K562 (cell line): ENCODE measurements at regions of chr2 and their contacts with region 1.

Region 1: DNA sequence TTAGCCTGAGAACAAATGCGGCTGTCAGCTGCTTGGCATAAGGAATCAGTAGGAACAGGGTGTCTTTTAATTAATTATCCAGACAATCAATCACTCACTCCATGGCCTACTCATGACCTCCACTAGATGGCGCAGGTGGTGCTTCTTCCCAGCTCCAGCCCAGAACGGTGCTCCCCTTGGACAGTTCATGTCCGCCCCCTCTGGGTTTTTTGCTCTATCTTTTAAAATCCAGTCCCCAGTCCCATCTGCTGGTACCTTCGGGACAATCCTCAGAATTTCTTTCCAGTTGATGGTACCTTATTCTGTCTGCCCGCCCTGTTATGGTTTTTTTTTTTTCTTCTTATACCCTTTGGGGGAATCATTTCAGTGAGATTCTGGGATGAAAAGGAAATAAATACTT is 99.8 kb downstream of the CACNB4 start:
- DNase-seq: peak; percentile 80 to 88 (median 85)
- ATAC-seq: peak; percentile 97
- H3K4me3 ChIP-seq: no peak overlapping the region
- H3K27ac ChIP-seq: no peak overlapping the region
- H3K4me1 ChIP-seq: no peaks in the 10 kb centered on the region; a peak in 1 of 5 replicates
- H3K27me3 ChIP-seq: peaks cover 16 to 17% of the 10 kb centered on the region in 2 experiments
- CTCF ChIP-seq: peak; percentile 93 to 97 (median 97)
- EP300 ChIP-seq: peak; percentile 25; the same call in 1 of the 2 replicates
- POLR2A ChIP-seq: no peak
- RAD21 ChIP-seq: peak; percentile 74 to 83

Region 2: DNA sequence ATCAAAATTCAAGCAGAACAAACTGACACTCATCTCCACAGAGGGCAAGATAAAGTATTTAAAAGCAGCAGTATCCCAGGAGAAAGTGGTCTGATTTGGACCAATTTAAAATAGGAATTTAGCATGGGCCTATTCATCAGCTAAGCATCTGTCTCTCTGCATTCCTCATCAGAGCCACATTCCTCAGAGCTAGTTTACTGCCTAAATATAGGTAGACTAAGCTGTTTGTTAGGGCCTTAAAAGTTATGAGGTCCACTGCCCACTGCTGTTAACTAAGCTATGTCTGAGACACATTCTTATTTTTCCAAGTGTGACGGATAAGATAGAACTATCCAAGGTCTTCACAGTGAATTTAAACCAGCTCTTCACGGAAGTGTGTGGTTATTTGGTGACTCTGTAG is 282.3 kb before region 1 on chr2:
- CTCF ChIA-PET with region 1: no interaction called
- POLR2A ChIA-PET with region 1: no interaction called
- in situ Hi-C with region 1: no loop called
- intact Hi-C with region 1: no loop called
- DNase-seq: no peak
- ATAC-seq: no peak
- H3K4me3 ChIP-seq: no peak overlapping the region
- H3K27ac ChIP-seq: no peak overlapping the region
- H3K4me1 ChIP-seq: peaks cover 0 to 8% of the 10 kb centered on the region in 2 experiments; a peak in 3 of 5 replicates
- H3K27me3 ChIP-seq: 0 out of 5 replicates have a peak, but pooled peaks cover 0 to 3% of the 10 kb centered on the region in 2 experiments
- CTCF ChIP-seq: no peak
- EP300 ChIP-seq: no peak
- POLR2A ChIP-seq: no peak
- RAD21 ChIP-seq: no peak

Region 3: DNA sequence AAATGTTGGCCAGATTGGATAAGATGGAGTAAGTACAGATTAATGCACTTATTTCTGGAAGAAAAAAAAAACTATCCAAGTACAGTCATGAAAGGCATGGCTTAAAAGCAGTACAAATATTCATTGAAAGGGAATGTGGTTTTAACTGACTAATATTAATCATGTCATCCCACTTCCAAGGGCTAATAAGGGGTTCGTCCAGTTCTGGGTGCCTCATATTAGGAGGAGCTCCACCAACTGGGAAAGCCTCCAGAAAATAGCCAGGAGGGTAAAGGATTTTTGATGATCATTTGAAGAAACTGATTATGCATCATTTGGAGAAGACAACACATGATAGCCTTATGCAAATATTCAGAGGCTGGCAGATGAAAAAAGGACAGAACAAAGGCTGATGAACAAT is 55.6 kb before region 1 on chr2:
- CTCF ChIA-PET with region 1: no interaction called
- POLR2A ChIA-PET with region 1: no interaction called
- in situ Hi-C with region 1: no loop called
- intact Hi-C with region 1: no loop called
- DNase-seq: no peak
- ATAC-seq: no peak
- H3K4me3 ChIP-seq: no peak overlapping the region
- H3K27ac ChIP-seq: no peak overlapping the region
- H3K4me1 ChIP-seq: no peaks in the 10 kb centered on the region; a peak in 1 of 5 replicates
- H3K27me3 ChIP-seq: no peaks in the 10 kb centered on the region
- CTCF ChIP-seq: no peak
- EP300 ChIP-seq: no peak
- POLR2A ChIP-seq: no peak
- RAD21 ChIP-seq: no peak

Region 4: GRCh38 chr2:152025678-152026287 is 26.7 kb after region 1 on chr2:
- CTCF ChIA-PET with region 1: interaction called, 25 read pairs
- POLR2A ChIA-PET with region 1: no interaction called
- in situ Hi-C with region 1: no loop called
- intact Hi-C with region 1: loop called (anchors 1 kb)
- DNase-seq: peak; percentile 70 to 90 (median 78)
- ATAC-seq: peak; percentile 99
- H3K4me3 ChIP-seq: no peak overlapping the region
- H3K27ac ChIP-seq: no peak overlapping the region
- H3K4me1 ChIP-seq: no peaks in the 10 kb centered on the region
- H3K27me3 ChIP-seq: peaks cover 0 to 7% of the 10 kb centered on the region in 2 experiments; a peak in 2 of 5 replicates
- CTCF ChIP-seq: peak; percentile 86 to 100 (median 98)
- EP300 ChIP-seq: no peak
- POLR2A ChIP-seq: no peak
- RAD21 ChIP-seq: peak; percentile 94 to 99

Region 5: GRCh38 chr2:152284398-152284797 is 285.3 kb after region 1 on chr2:
- CTCF ChIA-PET with region 1: no interaction called
- POLR2A ChIA-PET with region 1: no interaction called
- in situ Hi-C with region 1: no loop called
- intact Hi-C with region 1: no loop called
- DNase-seq: no peak
- ATAC-seq: no peak
- H3K4me3 ChIP-seq: no peak overlapping the region
- H3K27ac ChIP-seq: no peak overlapping the region
- H3K4me1 ChIP-seq: no peaks in the 10 kb centered on the region
- H3K27me3 ChIP-seq: no peaks in the 10 kb centered on the region
- CTCF ChIP-seq: no peak
- EP300 ChIP-seq: no peak
- POLR2A ChIP-seq: no peak
- RAD21 ChIP-seq: no peak